Transverse colon (tissue), 4 donors: ENCODE measurements at regions of chr15 and their contacts with region 1.

Region 1: DNA sequence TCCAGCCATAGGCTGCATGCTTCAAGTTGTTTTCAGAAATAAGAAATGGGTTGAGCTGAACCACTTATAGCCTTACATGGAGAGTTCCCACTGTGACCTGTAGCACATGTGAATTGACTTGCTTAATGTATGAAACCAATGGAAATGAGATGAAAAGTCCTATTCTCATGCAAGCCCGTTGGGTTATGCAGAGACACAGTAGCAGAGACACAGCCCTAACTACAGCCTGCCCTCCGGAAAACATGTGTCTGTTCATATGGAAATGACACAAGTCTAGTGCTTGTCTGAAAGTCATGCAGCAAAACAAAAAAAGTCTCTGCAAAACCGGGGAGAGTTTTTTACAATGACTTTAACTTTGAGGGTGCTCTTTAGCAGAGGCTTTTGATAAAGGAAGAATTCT is 14.4 kb downstream of the HIGD2B start:
- DNase-seq: no peak
- H3K4me3 ChIP-seq: no peak overlapping the region
- H3K27ac ChIP-seq: no peak overlapping the region
- H3K4me1 ChIP-seq: peaks cover 0 to 6% (median 3%) of the 10 kb centered on the region in 4 donors
- H3K27me3 ChIP-seq: peaks cover 29% of the 10 kb centered on the region
- CTCF ChIP-seq: no peak
- EP300 ChIP-seq: no peak
- POLR2A ChIP-seq: no peak

Region 2: DNA sequence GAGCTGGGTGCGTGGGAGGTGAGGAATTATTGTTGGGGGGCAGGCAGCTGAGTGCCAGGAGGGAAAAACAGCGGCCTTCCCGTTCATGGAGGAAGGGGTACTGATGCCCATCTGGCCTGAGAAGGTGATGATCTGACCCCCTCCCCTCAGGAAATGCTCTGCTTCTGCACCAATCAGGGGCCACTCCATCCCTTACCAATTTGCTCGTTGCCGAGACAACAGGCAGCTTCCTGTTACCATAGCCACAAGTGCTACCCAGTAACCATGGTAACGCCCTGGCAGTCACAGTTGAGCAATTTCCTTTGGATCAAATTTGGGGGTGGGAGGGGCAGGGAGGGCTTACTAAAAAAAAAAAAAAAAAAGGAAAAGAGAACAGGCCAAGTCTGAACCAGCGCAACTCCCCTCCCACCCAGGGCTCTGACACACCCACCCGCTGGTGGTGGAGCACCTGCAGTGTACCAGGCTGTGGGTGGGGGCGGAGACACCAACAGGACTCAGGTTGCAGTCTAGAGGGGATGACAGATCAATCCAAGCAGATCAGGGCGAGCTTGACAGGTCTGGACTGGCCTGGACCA is 365.2 kb before region 1 on chr15:
- in situ Hi-C with region 1: loop called in 1 of 4 experiments (anchors 10 kb)
- intact Hi-C with region 1: no loop called
- DNase-seq: no peak
- H3K4me3 ChIP-seq: no peak overlapping the region
- H3K27ac ChIP-seq: no peak overlapping the region
- H3K4me1 ChIP-seq: no peaks in the 10 kb centered on the region
- H3K27me3 ChIP-seq: no peaks in the 10 kb centered on the region
- CTCF ChIP-seq: no peak
- EP300 ChIP-seq: no peak
- POLR2A ChIP-seq: no peak

Region 3: GRCh38 chr15:72599855-72600464 is 71.6 kb before region 1 on chr15:
- in situ Hi-C with region 1: loop called in 1 of 4 experiments (anchors 10 kb)
- intact Hi-C with region 1: no loop called
- DNase-seq: no peak
- H3K4me3 ChIP-seq: no peak overlapping the region
- H3K27ac ChIP-seq: no peak overlapping the region
- H3K4me1 ChIP-seq: no peaks in the 10 kb centered on the region
- H3K27me3 ChIP-seq: no peaks in the 10 kb centered on the region
- CTCF ChIP-seq: peak; percentile 47 to 56 (median 54)
- EP300 ChIP-seq: no peak
- POLR2A ChIP-seq: no peak

Region 4: DNA sequence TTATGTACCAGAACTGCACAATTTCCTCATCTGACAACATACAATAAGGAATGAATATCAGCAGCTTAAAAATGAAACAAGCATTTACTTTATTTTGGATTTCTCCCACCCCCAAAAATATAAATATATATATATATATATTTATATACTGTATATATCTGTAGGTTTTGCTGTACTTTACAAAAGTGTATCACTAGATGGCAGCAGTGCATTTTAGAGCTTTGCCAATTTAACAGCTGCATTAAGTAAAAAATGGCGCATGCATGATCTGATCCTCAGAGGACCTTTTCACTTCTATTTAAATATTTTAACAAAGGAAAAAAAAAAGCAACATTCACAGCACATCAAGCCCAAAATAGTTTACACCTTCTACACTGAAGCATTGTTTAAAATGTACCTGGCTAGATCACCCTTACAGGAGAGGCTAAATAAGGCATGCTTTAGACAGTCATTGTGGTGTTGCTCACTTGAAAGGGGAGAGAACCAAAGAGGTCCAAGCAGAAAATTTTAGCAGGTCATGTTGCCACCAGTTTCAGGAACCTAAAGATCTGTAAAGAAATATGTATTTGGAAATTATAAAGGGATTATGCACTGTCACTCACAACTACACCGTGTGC is 889.1 kb after region 1 on chr15:
- in situ Hi-C with region 1: no loop called
- intact Hi-C with region 1: no loop called
- DNase-seq: no peak
- H3K4me3 ChIP-seq: no peak overlapping the region
- H3K27ac ChIP-seq: no peak overlapping the region
- H3K4me1 ChIP-seq: peaks cover 0 to 5% (median 0%) of the 10 kb centered on the region in 4 donors
- H3K27me3 ChIP-seq: no peaks in the 10 kb centered on the region
- CTCF ChIP-seq: peak; percentile 34 to 61 (median 51)
- EP300 ChIP-seq: no peak
- POLR2A ChIP-seq: no peak